ENCODE measurements at regions of chr2 and their contacts with region 1.

Region 1: GRCh38 chr2:148603562-148603920 is 41.0 kb upstream of the EPC2 start:
- DNase-seq: peak; percentile 10
- H3K4me3 Mint-ChIP-seq: no peak overlapping the region
- H3K27ac Mint-ChIP-seq: no peak overlapping the region
- H3K4me1 Mint-ChIP-seq: peaks cover 11% of the 10 kb centered on the region
- H3K27me3 Mint-ChIP-seq: peaks cover 8% of the 10 kb centered on the region

Region 2: DNA sequence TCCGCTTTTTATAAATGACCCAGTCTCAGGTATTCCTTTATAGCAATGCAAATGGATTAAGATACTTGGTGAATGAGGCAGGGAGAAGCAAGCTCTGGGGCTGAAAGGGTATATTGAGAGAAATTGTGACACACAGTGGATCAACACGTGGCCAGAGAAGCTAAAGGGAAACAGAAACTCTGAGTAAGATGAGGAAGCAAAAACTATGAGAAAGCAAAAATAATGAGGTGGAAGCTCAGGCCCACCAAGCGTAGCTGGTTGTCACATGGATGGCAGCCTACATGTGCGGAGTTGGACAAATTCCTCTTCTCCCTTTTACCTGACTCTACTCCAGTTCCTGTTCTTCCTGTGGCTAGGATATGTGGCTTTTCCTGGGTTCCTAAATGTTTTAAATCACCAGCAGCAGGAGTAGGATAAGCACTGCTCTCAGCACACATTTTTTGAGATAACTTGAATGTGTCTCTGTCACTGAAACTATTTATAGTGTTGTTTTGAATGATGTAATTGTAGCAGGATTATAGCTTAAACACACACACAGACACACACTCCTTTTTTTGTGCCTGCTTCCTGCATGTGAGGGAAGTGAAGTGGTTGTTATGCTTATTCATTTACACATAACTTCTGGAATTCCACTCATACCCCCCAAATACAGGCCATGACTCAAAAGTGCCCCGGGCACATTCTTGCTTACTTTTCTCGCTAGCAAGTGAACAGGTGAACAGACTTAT is 10.9 kb after region 1 on chr2:
- CTCF ChIA-PET with region 1: interaction called, 17 read pairs
- POLR2A ChIA-PET with region 1: no interaction called
- DNase-seq: no peak
- H3K4me3 Mint-ChIP-seq: no peak overlapping the region
- H3K27ac Mint-ChIP-seq: no peak overlapping the region
- H3K4me1 Mint-ChIP-seq: peaks cover 13% of the 10 kb centered on the region
- H3K27me3 Mint-ChIP-seq: peaks cover 3% of the 10 kb centered on the region